GM12878 (cell line): ENCODE measurements at regions of chr7 and their contacts with region 1.

Region 1: DNA sequence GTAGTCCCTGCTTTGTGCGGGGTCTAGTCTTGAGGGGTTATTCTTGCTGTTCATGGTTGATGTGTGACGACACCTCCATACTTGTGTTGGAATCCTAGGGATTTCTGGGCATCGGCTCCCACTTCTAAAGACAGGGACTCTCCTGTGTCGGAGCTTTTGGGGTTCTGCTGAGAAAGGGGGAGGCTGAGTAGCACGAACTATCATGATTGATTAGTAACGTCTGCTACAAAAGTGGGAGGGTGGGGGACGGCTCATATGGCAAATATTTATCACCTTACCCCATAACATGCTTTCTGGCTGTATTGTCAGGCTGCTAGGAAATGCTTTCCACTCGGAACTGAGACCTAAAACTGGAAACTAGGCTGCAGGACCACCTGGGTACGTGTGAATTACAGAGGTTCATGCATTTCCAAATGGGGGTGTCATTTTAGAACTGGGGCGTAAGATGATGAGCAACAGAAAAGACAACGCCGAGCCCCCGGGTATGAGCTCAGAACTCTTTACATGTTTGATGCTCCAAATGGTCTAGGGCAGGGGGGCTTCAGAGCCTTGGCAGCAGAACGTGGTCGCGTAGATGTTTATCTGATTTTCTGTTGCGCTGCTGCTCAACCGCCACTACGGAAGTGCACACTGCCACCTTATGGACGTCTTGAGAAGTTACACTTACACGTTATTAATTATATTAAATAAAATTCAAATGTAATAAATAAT is 15.1 kb upstream of the NME8 start:
- DNase-seq: no peak
- ATAC-seq: peak; percentile 76
- H3K4me3 ChIP-seq: peak overlapping the region; percentile 57; the same call in 1 of the 2 replicates
- H3K27ac ChIP-seq: peak overlapping the region; percentile 26; the same call in 1 of the 2 replicates
- H3K4me1 ChIP-seq: peaks cover 4% of the 10 kb centered on the region; the same call in 1 of the 2 replicates
- H3K27me3 ChIP-seq: no peaks in the 10 kb centered on the region
- CTCF ChIP-seq: peak; percentile 59 to 67 (median 62); a peak in 5 of 6 replicates
- EP300 ChIP-seq: no peak
- POLR2A ChIP-seq: no peak
- RAD21 ChIP-seq: peak; percentile 93

Region 2: GRCh38 chr7:37234928-37235327 is 598.3 kb before region 1 on chr7:
- CTCF ChIA-PET with region 1: interaction called, 5 read pairs
- POLR2A ChIA-PET with region 1: no interaction called
- RAD21 ChIA-PET with region 1: interaction called, 3 read pairs
- SMC1A ChIA-PET with region 1: interaction called, 3 read pairs
- in situ Hi-C with region 1: loop called (anchors 10 kb)
- intact Hi-C with region 1: no loop called
- DNase-seq: no peak
- ATAC-seq: peak; percentile 46; the same call in 1 of the 3 replicates
- H3K4me3 ChIP-seq: no peak overlapping the region
- H3K27ac ChIP-seq: no peak overlapping the region
- H3K4me1 ChIP-seq: no peaks in the 10 kb centered on the region
- H3K27me3 ChIP-seq: no peaks in the 10 kb centered on the region
- CTCF ChIP-seq: peak; percentile 52 to 57 (median 52); a peak in 4 of 6 replicates
- EP300 ChIP-seq: no peak
- POLR2A ChIP-seq: no peak
- RAD21 ChIP-seq: peak; percentile 69

Region 3: DNA sequence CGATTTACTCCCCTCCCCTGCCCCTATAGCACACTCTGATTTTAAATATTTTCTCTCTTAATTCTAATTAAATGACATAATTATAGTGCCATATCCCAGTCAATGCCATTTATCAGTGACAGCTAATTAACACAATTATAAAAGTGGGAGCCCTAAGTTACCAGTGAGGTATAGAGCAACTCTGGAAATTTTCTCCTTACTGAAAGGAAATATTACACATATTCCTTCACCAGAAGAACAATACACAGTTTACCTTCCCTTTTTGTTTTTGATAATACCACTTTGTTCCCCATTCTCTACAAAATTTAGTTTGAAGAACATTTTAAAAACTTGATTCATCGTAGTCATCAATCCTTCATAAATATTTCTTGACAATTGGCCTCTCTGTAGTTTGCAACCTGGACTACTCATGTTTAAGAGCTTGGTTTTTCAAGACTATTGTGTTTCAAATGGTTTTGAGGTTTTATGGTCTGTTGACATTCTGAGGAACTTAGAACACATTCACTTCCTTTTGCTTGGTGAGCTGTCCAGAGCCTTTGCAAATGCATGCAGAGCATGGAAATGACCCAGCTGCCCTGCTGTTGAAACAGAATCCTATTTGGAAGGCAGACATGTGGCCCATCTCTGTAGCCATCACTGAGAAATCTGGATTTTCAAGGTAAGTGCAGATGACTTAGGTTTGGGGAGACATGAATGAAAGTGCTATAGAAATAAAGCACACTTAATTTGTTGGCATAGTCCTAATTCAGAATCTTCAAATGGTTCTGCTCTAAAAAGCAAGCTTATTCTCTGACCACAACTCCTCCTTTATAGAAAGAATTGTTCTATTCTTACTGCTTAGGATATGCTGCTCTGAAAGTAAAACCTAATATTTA is 149.8 kb before region 1 on chr7 and contains the start of gene GPR141:
- CTCF ChIA-PET with region 1: interaction called, 22 read pairs
- POLR2A ChIA-PET with region 1: no interaction called
- RAD21 ChIA-PET with region 1: interaction called, 3 read pairs
- SMC1A ChIA-PET with region 1: interaction called, 8 read pairs
- in situ Hi-C with region 1: no loop called
- intact Hi-C with region 1: loop called (anchors 5 kb)
- DNase-seq: peak; percentile 93
- ATAC-seq: peak; percentile 97
- H3K4me3 ChIP-seq: 0 out of 2 replicates have a peak within 1 kb of the TSS, but pooled peaks have one; percentile 44
- H3K27ac ChIP-seq: peak within 1 kb of the TSS; percentile 48
- H3K4me1 ChIP-seq: peaks cover 25% of the 10 kb centered on the region
- H3K27me3 ChIP-seq: no peaks in the 10 kb centered on the region
- CTCF ChIP-seq: no peak
- EP300 ChIP-seq: peak; percentile 62 to 74; a peak in 3 of 4 replicates
- POLR2A ChIP-seq: no peak
- RAD21 ChIP-seq: peak; percentile 7; the same call in 1 of the 2 replicates
- polyA plus RNA-seq, gene GPR141: 0.97 to 1.2 TPM

Region 4: GRCh38 chr7:37759526-37759925 is 73.7 kb before region 1 on chr7:
- CTCF ChIA-PET with region 1: interaction called, 10 read pairs
- POLR2A ChIA-PET with region 1: no interaction called
- RAD21 ChIA-PET with region 1: interaction called, 5 read pairs
- SMC1A ChIA-PET with region 1: interaction called, 8 read pairs
- in situ Hi-C with region 1: no loop called
- intact Hi-C with region 1: no loop called
- DNase-seq: no peak
- ATAC-seq: no peak
- H3K4me3 ChIP-seq: no peak overlapping the region
- H3K27ac ChIP-seq: no peak overlapping the region
- H3K4me1 ChIP-seq: no peaks in the 10 kb centered on the region
- H3K27me3 ChIP-seq: no peaks in the 10 kb centered on the region
- CTCF ChIP-seq: no peak
- EP300 ChIP-seq: no peak
- POLR2A ChIP-seq: no peak
- RAD21 ChIP-seq: no peak

Region 5: DNA sequence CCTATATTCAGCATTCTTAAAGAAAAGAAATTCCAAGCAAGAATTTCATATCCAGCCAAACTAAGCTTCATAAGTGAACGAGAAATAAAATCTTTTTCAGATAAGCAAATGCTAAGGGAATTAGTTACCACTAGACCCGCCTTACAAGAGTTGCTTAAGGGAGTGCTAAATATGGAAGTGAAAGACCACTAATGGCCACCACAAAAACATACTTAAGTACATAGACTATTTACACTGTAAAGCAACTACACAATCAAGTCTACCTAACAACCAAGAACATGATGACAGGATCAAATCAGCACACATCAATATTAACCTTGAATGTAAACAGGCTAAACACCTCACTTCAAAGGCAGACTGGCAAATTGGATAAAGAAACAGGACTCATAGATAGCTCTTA is 27.1 kb before region 1 on chr7:
- CTCF ChIA-PET with region 1: interaction called, 3 read pairs
- POLR2A ChIA-PET with region 1: no interaction called
- RAD21 ChIA-PET with region 1: interaction called, 5 read pairs
- SMC1A ChIA-PET with region 1: interaction called, 10 read pairs
- in situ Hi-C with region 1: no loop called
- intact Hi-C with region 1: no loop called
- DNase-seq: no peak
- ATAC-seq: peak; percentile 46; the same call in 1 of the 3 replicates
- H3K4me3 ChIP-seq: no peak overlapping the region
- H3K27ac ChIP-seq: no peak overlapping the region
- H3K4me1 ChIP-seq: 0 out of 2 replicates have a peak, but pooled peaks cover under 1% of the 10 kb centered on the region
- H3K27me3 ChIP-seq: no peaks in the 10 kb centered on the region
- CTCF ChIP-seq: no peak
- EP300 ChIP-seq: no peak
- POLR2A ChIP-seq: no peak
- RAD21 ChIP-seq: no peak

Region 6: GRCh38 chr7:37853474-37853873 is 20.2 kb after region 1 on chr7:
- CTCF ChIA-PET with region 1: interaction called, 45 read pairs
- POLR2A ChIA-PET with region 1: no interaction called
- RAD21 ChIA-PET with region 1: no interaction called
- SMC1A ChIA-PET with region 1: interaction called, 8 read pairs
- in situ Hi-C with region 1: no loop called
- intact Hi-C with region 1: no loop called
- DNase-seq: no peak
- ATAC-seq: peak; percentile 71
- H3K4me3 ChIP-seq: no peak overlapping the region
- H3K27ac ChIP-seq: no peak overlapping the region
- H3K4me1 ChIP-seq: no peaks in the 10 kb centered on the region
- H3K27me3 ChIP-seq: no peaks in the 10 kb centered on the region; a peak in 1 of 4 replicates
- CTCF ChIP-seq: peak; percentile 58 to 65 (median 62)
- EP300 ChIP-seq: no peak
- POLR2A ChIP-seq: no peak
- RAD21 ChIP-seq: peak; percentile 72

Region 7: DNA sequence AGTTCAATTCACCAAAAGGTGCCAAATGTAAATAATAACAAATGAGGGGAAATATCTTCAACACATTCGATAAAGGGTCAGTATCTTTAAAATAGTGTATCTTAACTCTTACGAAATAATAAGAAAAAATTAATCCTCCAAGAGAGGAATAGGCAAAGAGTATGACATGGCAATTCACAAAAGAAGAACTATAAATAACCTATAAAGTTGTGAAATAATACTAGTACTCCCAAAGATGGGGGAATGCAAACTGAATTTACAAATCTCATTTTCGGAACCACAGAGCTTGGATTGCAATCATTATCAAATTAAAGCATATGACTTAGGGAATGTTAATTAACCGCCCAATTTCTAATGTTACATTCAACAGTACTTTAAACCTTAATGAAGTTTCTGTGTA is 518.3 kb after region 1 on chr7:
- CTCF ChIA-PET with region 1: no interaction called
- POLR2A ChIA-PET with region 1: no interaction called
- RAD21 ChIA-PET with region 1: no interaction called
- SMC1A ChIA-PET with region 1: no interaction called
- in situ Hi-C with region 1: no loop called
- intact Hi-C with region 1: no loop called
- DNase-seq: no peak
- ATAC-seq: no peak
- H3K4me3 ChIP-seq: peak overlapping the region; percentile 16; the same call in 1 of the 2 replicates
- H3K27ac ChIP-seq: no peak overlapping the region
- H3K4me1 ChIP-seq: no peaks in the 10 kb centered on the region
- H3K27me3 ChIP-seq: no peaks in the 10 kb centered on the region
- CTCF ChIP-seq: no peak
- EP300 ChIP-seq: no peak
- POLR2A ChIP-seq: no peak
- RAD21 ChIP-seq: no peak